ENCODE measurements at regions of chr17 and their contacts with region 1.

Region 1: DNA sequence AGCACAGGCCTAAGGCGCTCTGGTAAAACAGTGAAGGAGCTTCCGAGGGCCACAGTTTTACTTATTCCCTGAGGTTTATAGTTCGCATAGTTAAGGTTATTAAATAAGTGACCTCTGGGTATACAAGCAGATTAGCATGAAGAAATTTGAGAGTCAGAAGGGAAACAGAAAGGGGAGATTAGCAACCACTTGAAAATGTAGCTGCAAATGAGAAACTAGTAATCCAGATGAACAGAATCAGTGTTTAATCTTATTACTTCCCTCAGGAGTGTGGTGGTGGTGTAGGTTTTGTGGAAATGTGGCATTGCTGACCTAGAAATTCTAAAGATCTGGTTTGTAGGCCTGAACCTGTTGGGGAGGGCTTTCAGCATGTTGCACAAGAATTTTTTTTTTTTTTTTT is 130.4 kb downstream of the CCDC182 start:
- DNase-seq: no peak
- ATAC-seq: 0 out of 2 replicates have a peak, but pooled peaks have one; percentile 17
- H3K4me3 ChIP-seq: no peak overlapping the region
- H3K27ac ChIP-seq: no peak overlapping the region
- H3K4me1 ChIP-seq: peaks cover 5% of the 10 kb centered on the region
- H3K27me3 ChIP-seq: no peaks in the 10 kb centered on the region
- CTCF ChIP-seq: no peak
- POLR2A ChIP-seq: no peak
- RAD21 ChIP-seq: no peak

Region 2: GRCh38 chr17:57451191-57451590 is 163.6 kb before region 1 on chr17:
- CTCF ChIA-PET with region 1: no interaction called
- POLR2A ChIA-PET with region 1: interaction called, 15 read pairs
- dilution Hi-C with region 1: no loop called
- in situ Hi-C with region 1: no loop called
- intact Hi-C with region 1: no loop called
- DNase-seq: no peak
- ATAC-seq: no peak
- H3K4me3 ChIP-seq: no peak overlapping the region
- H3K27ac ChIP-seq: no peak overlapping the region
- H3K4me1 ChIP-seq: peaks cover 8% of the 10 kb centered on the region
- H3K27me3 ChIP-seq: no peaks in the 10 kb centered on the region
- CTCF ChIP-seq: no peak
- POLR2A ChIP-seq: no peak
- RAD21 ChIP-seq: no peak

Region 3: GRCh38 chr17:57810721-57811637 is 196.2 kb after region 1 on chr17:
- CTCF ChIA-PET with region 1: no interaction called
- POLR2A ChIA-PET with region 1: no interaction called
- dilution Hi-C with region 1: no loop called
- in situ Hi-C with region 1: no loop called
- intact Hi-C with region 1: no loop called
- DNase-seq: peak; percentile 4
- ATAC-seq: peak; percentile 51
- H3K4me3 ChIP-seq: no peak overlapping the region
- H3K27ac ChIP-seq: no peak overlapping the region
- H3K4me1 ChIP-seq: no peaks in the 10 kb centered on the region
- H3K27me3 ChIP-seq: peaks cover 26% of the 10 kb centered on the region
- CTCF ChIP-seq: no peak
- POLR2A ChIP-seq: no peak
- RAD21 ChIP-seq: no peak

Region 4: DNA sequence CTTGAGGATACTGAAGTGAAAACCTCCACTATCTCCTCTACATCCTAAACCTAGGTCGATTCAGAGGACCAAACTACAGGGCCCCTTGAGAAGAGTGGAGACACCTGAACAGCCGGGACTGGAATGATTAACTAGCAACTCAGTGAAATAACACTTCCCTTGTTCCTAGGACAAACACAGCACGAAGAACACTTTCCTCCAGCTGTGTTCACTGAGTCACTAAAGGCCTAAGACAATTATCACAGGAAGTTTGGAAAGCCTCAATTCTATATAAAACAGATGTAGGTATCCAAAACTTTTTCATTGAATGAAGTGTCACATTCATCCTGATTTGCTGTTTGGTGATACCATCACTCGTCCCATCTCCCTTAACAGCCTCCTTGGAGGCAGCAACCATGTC is 356.0 kb after region 1 on chr17:
- CTCF ChIA-PET with region 1: no interaction called
- POLR2A ChIA-PET with region 1: no interaction called
- dilution Hi-C with region 1: no loop called
- in situ Hi-C with region 1: no loop called
- intact Hi-C with region 1: no loop called
- DNase-seq: peak; percentile 67
- ATAC-seq: peak; percentile 16; the same call in 1 of the 2 replicates
- H3K4me3 ChIP-seq: no peak overlapping the region
- H3K27ac ChIP-seq: no peak overlapping the region
- H3K4me1 ChIP-seq: peaks cover 10% of the 10 kb centered on the region
- H3K27me3 ChIP-seq: no peaks in the 10 kb centered on the region
- CTCF ChIP-seq: no peak
- POLR2A ChIP-seq: no peak
- RAD21 ChIP-seq: no peak

Region 5: GRCh38 chr17:58254803-58255388 is 640.2 kb after region 1 on chr17:
- CTCF ChIA-PET with region 1: no interaction called
- POLR2A ChIA-PET with region 1: no interaction called
- dilution Hi-C with region 1: no loop called
- in situ Hi-C with region 1: no loop called
- intact Hi-C with region 1: no loop called
- DNase-seq: no peak
- ATAC-seq: no peak
- H3K4me3 ChIP-seq: no peak overlapping the region
- H3K27ac ChIP-seq: no peak overlapping the region
- H3K4me1 ChIP-seq: no peaks in the 10 kb centered on the region
- H3K27me3 ChIP-seq: peaks cover 20% of the 10 kb centered on the region
- CTCF ChIP-seq: no peak
- POLR2A ChIP-seq: no peak
- RAD21 ChIP-seq: no peak